HEK293 (cell line): ENCODE measurements at regions of chr6 and their contacts with region 1.

Region 1: GRCh38 chr6:24223115-24223919 is 97.3 kb downstream of the NRSN1 start:
- H3K4me3 ChIP-seq: no peak overlapping the region
- H3K27ac ChIP-seq: no peak overlapping the region
- H3K4me1 ChIP-seq: no peaks in the 10 kb centered on the region
- CTCF ChIP-seq: no peak

Region 2: DNA sequence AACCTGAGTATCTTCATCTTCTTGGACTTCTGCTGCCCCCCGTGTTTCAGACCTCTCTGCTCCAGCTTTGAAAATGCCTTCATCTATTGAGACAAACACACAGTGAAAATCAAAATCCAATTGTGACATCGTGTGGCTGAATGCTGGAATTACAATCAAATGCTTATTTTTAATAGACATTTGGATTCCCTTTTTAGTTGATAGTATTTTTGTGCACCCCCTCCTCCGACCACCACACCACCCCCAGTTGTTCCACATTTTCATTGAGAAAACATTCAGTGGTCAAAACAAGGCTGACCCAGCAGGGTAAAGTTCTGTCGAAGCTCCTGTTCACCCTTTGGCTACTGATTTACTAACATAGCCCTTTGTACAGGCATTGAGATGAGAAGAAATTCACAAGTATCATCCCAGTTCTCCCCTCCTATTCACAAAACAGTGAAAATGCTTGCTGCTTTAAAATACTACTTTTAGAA is 18.3 kb before region 1 on chr6:
- CTCF ChIA-PET with region 1: interaction called, 24 read pairs
- POLR2A ChIA-PET with region 1: no interaction called
- H3K4me3 ChIP-seq: no peak overlapping the region
- H3K27ac ChIP-seq: no peak overlapping the region
- H3K4me1 ChIP-seq: no peaks in the 10 kb centered on the region
- CTCF ChIP-seq: peak; percentile 36; the same call in 1 of the 2 replicates